ENCODE measurements at regions of chr12 and their contacts with region 1.

Region 1: GRCh38 chr12:56839915-56840325 is 76.8 kb downstream of the HSD17B6 start:
- DNase-seq: peak; percentile 13
- ATAC-seq: peak; percentile 88
- H3K4me3 ChIP-seq: no peak overlapping the region
- H3K27ac ChIP-seq: no peak overlapping the region
- H3K4me1 ChIP-seq: no peaks in the 10 kb centered on the region
- H3K27me3 ChIP-seq: peaks cover 2% of the 10 kb centered on the region
- CTCF ChIP-seq: peak; percentile 69

Region 2: GRCh38 chr12:56766535-56766934 is 73.4 kb before region 1 on chr12:
- CTCF ChIA-PET with region 1: no interaction called
- POLR2A ChIA-PET with region 1: no interaction called
- in situ Hi-C with region 1: no loop called
- intact Hi-C with region 1: loop called (anchors 10 kb)
- DNase-seq: no peak
- ATAC-seq: no peak
- H3K4me3 ChIP-seq: no peak overlapping the region
- H3K27ac ChIP-seq: no peak overlapping the region
- H3K4me1 ChIP-seq: no peaks in the 10 kb centered on the region
- H3K27me3 ChIP-seq: no peaks in the 10 kb centered on the region
- CTCF ChIP-seq: no peak

Region 3: GRCh38 chr12:56878010-56878339 is 38.1 kb after region 1 on chr12:
- CTCF ChIA-PET with region 1: no interaction called
- POLR2A ChIA-PET with region 1: no interaction called
- in situ Hi-C with region 1: no loop called
- intact Hi-C with region 1: no loop called
- DNase-seq: no peak
- ATAC-seq: no peak
- H3K4me3 ChIP-seq: no peak overlapping the region
- H3K27ac ChIP-seq: no peak overlapping the region
- H3K4me1 ChIP-seq: no peaks in the 10 kb centered on the region
- H3K27me3 ChIP-seq: peaks cover 15% of the 10 kb centered on the region
- CTCF ChIP-seq: no peak

Region 4: DNA sequence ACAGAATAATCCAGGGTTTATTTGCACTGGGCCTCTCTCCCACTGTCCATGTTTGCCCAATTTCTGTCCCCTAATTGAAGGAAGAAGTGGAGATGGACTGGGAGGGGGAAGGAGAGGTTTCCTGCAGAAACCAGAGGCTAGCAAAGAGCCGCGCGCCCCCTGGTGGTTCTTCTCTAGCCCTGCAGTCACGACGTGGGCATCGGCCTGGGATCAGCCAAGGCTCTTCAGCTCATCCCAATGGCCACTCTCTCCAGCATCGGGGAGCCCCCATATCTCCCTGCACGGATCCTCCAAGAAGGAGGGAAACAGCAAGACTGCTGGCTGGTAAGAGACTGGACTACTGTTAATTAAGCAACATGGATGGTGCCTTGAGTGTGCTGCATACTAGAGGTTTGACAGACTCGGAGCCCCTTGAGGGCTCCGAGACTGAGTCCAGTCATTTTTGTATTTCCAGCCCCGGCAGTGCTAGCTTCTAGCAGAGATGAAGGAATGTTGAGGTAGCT is 147.7 kb after region 1 on chr12:
- CTCF ChIA-PET with region 1: interaction called, 13 read pairs
- POLR2A ChIA-PET with region 1: no interaction called
- in situ Hi-C with region 1: no loop called
- intact Hi-C with region 1: loop called (anchors 5 kb)
- DNase-seq: peak; percentile 39
- ATAC-seq: peak; percentile 91
- H3K4me3 ChIP-seq: no peak overlapping the region
- H3K27ac ChIP-seq: no peak overlapping the region
- H3K4me1 ChIP-seq: no peaks in the 10 kb centered on the region
- H3K27me3 ChIP-seq: no peaks in the 10 kb centered on the region; the same call in 1 of the 2 replicates
- CTCF ChIP-seq: peak; percentile 97

Measured in Panc1 (cell line).